CD4-positive, alpha-beta T cell (primary cell): ENCODE measurements at regions of chr15 and their contacts with region 1.

Region 1: DNA sequence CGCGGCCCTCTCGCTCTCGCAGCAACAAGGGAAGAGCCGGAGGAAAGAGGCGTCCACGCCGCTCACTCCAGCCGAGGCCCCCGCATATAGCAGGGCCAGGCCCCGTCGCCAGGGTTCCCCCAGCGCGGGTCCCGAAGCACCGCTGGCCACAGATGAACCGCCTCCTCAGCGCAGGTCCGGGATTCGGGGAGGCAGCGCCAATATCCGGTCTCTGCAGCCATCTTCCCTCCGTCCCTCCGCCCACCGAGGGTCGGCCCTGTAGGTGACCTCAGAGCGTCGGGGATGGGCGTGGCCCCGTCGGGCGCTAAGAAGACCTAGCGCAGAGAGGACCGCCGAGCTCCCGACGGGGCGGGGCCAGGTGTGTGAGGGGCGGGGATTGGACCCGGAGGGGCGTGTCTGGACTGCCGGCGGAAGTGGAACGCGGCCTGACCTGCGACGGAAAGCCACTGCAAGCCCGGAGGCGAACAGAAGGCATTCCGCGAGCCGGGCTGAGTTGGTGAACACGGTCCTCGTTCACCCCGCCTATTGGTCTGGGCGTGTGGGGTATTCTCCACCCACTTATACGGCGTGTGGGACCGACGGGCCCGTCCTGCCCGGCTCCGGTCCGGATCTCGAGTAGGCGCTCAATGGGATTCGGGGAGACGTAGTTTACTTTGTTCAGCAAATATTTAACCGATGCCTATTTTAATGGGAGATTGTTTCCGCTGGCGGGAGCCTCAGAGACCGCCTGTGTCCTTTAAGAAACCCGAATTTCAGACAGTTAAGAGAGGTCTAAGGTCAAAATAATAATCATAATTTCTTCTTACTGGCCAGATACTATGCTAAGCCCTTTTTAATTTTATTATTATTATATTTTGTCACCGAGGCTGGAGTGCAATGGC is 26.9 kb upstream of the MTHFS start:
- DNase-seq: peak; percentile 93 to 99 (median 98)
- ATAC-seq: peak; percentile 89
- H3K4me3 ChIP-seq: peak overlapping the region; percentile 80
- H3K4me3 Mint-ChIP-seq: peak overlapping the region; percentile 96
- H3K27ac ChIP-seq: peak overlapping the region; percentile 91 to 97
- H3K27ac Mint-ChIP-seq: peak overlapping the region; percentile 95
- H3K4me1 ChIP-seq: peaks cover 21% of the 10 kb centered on the region
- H3K4me1 Mint-ChIP-seq: peaks cover 27% of the 10 kb centered on the region
- H3K27me3 ChIP-seq: no peaks in the 10 kb centered on the region
- H3K27me3 Mint-ChIP-seq: no peaks in the 10 kb centered on the region
- CTCF ChIP-seq: no peak

Region 2: DNA sequence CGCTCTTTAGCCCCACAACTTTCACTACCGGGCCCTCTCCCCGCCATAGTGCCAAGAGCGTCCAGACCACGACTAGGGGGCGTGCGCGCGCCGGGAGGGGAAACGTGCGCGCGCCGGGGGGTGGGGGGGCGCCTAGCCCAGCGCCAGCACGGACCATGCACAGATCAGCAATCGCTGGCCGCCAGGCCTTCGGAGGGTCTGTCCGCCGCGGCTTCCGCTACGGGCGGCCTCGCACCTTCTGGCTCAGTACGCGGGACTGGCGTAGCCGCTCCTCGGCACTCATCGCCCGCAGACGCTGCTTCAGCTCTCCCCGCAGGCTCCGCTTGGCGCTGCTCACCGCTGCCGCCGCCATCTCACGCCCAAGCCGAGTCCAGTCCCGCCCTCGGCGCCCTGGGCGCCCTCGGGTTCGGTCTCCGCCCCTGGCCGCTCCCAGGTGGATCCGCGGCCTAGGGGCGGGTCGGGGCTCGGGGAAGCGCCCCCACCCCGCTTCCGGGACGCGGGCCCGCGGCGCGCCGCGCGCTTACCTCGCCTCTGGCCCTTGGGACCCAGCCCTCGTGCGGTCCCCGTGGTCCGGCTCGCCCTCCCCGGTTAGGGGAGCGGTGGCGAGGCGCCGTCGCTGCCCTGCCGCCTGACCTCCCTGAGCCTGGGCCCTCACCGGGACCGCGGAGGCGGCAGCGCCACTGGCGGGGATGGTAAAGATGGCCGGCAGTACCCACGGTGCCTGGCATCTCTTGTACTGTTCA is 26.9 kb before region 1 on chr15 and contains the start of gene MTHFS:
- CTCF ChIA-PET with region 1: interaction called, 20 read pairs
- POLR2A ChIA-PET with region 1: interaction called, 139 read pairs
- intact Hi-C with region 1: loop called (anchors 1 kb)
- DNase-seq: peak; percentile 61 to 94 (median 77)
- ATAC-seq: peak; percentile 85
- H3K4me3 ChIP-seq: peak within 1 kb of the TSS; percentile 80
- H3K4me3 Mint-ChIP-seq: peak within 1 kb of the TSS; percentile 97
- H3K27ac ChIP-seq: peak within 1 kb of the TSS; percentile 93 to 95
- H3K27ac Mint-ChIP-seq: peak within 1 kb of the TSS; percentile 97
- H3K4me1 ChIP-seq: peaks cover 16% of the 10 kb centered on the region
- H3K4me1 Mint-ChIP-seq: peaks cover 42% of the 10 kb centered on the region
- H3K27me3 ChIP-seq: no peaks in the 10 kb centered on the region
- H3K27me3 Mint-ChIP-seq: no peaks in the 10 kb centered on the region
- CTCF ChIP-seq: peak; percentile 41
- total RNA-seq, gene MTHFS: 9.1 to 9.8 TPM

Region 3: DNA sequence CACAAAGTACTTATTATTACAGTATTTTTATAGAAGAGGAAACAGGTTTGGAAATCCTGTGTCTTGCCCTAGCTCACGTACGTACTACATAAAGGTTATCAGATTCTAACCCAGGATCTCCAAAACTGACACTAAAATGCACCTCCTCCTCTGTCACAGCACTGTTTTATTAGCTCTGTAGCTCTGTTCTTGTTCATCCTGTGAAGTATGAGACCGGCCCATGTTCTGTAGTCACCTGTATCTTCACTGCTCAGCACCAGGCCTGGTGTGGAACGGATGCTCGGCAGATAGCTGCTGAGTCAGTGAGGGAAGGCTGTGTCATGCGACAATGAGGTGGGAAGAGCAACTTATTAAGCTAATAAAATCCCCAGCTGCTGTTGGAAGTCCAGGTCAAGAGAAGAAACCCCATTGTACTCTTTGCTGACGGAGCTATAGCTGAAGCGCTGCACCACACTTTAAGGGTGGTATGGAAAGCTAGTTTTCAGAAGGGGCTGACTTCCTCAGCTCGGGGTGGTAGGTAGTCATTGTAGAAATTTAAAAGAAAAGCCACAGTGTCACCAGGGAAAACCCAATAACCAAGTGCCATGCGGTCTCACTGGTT is 24.4 kb after region 1 on chr15:
- CTCF ChIA-PET with region 1: no interaction called
- POLR2A ChIA-PET with region 1: interaction called, 13 read pairs
- intact Hi-C with region 1: no loop called
- DNase-seq: peak in 1 of 14 experiments; percentile 31
- ATAC-seq: no peak
- H3K4me3 ChIP-seq: no peak overlapping the region
- H3K4me3 Mint-ChIP-seq: no peak overlapping the region
- H3K27ac ChIP-seq: no peak overlapping the region
- H3K27ac Mint-ChIP-seq: no peak overlapping the region
- H3K4me1 ChIP-seq: no peaks in the 10 kb centered on the region
- H3K4me1 Mint-ChIP-seq: peaks cover 4% of the 10 kb centered on the region
- H3K27me3 ChIP-seq: no peaks in the 10 kb centered on the region
- H3K27me3 Mint-ChIP-seq: no peaks in the 10 kb centered on the region
- CTCF ChIP-seq: no peak

Region 4: DNA sequence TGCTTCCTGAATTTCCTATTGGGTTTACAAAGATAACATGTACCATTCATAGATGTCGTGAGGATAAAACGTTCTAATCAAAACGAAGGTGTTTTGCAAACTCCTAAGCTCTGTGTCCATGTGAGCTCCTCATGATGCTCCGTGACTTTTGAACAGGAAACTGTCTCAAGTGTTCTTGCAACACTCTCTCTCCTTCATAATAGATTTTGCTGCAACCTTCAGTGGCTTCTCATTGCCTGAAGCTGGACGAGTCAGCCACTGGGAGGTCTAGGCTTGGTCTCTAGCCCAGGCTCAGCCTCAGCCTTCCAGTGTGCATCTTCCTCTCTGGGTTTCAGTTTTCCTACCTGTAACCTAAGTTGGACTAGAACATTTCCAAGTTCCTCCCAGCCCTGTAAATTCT is 65.9 kb after region 1 on chr15:
- CTCF ChIA-PET with region 1: no interaction called
- POLR2A ChIA-PET with region 1: interaction called, 4 read pairs
- intact Hi-C with region 1: loop called (anchors 1 to 2 kb)
- DNase-seq: peak in 2 of 14 experiments; percentile 40 to 53
- ATAC-seq: no peak
- H3K4me3 ChIP-seq: no peak overlapping the region
- H3K4me3 Mint-ChIP-seq: no peak overlapping the region
- H3K27ac ChIP-seq: no peak overlapping the region
- H3K27ac Mint-ChIP-seq: no peak overlapping the region
- H3K4me1 ChIP-seq: peaks cover 4% of the 10 kb centered on the region
- H3K4me1 Mint-ChIP-seq: peaks cover 4% of the 10 kb centered on the region
- H3K27me3 ChIP-seq: no peaks in the 10 kb centered on the region
- H3K27me3 Mint-ChIP-seq: no peaks in the 10 kb centered on the region
- CTCF ChIP-seq: no peak

Region 5: GRCh38 chr15:80072285-80072994 is 148.7 kb after region 1 on chr15:
- CTCF ChIA-PET with region 1: no interaction called
- POLR2A ChIA-PET with region 1: interaction called, 13 read pairs
- intact Hi-C with region 1: no loop called
- DNase-seq: peak in 5 of 14 experiments; percentile 10 to 80 (median 69)
- ATAC-seq: peak; percentile 99
- H3K4me3 ChIP-seq: peak overlapping the region; percentile 31
- H3K4me3 Mint-ChIP-seq: peak overlapping the region; percentile 81
- H3K27ac ChIP-seq: no peak overlapping the region
- H3K27ac Mint-ChIP-seq: peak overlapping the region; percentile 55
- H3K4me1 ChIP-seq: no peaks in the 10 kb centered on the region
- H3K4me1 Mint-ChIP-seq: peaks cover 86% of the 10 kb centered on the region
- H3K27me3 ChIP-seq: no peaks in the 10 kb centered on the region
- H3K27me3 Mint-ChIP-seq: no peaks in the 10 kb centered on the region
- CTCF ChIP-seq: no peak